HepG2 (cell line): ENCODE measurements at regions of chr7 and their contacts with region 1.

Region 1: GRCh38 chr7:113289140-113289740 is 170.9 kb upstream of the SMIM30 start:
- DNase-seq: peak; percentile 36
- ATAC-seq: peak; percentile 100
- H3K4me3 ChIP-seq: no peak overlapping the region
- H3K27ac ChIP-seq: no peak overlapping the region
- H3K4me1 ChIP-seq: no peaks in the 10 kb centered on the region
- H3K27me3 ChIP-seq: no peaks in the 10 kb centered on the region
- CTCF ChIP-seq: peak; percentile 68
- EP300 ChIP-seq: no peak
- POLR2A ChIP-seq: no peak
- RAD21 ChIP-seq: no peak

Region 2: GRCh38 chr7:113015032-113015645 is 274.1 kb before region 1 on chr7:
- CTCF ChIA-PET with region 1: no interaction called
- POLR2A ChIA-PET with region 1: no interaction called
- in situ Hi-C with region 1: loop called (anchors 25 kb)
- intact Hi-C with region 1: loop called (anchors 1 kb)
- DNase-seq: peak; percentile 11
- ATAC-seq: no peak
- H3K4me3 ChIP-seq: no peak overlapping the region
- H3K27ac ChIP-seq: no peak overlapping the region
- H3K4me1 ChIP-seq: no peaks in the 10 kb centered on the region
- H3K27me3 ChIP-seq: no peaks in the 10 kb centered on the region
- CTCF ChIP-seq: peak; percentile 19; the same call in 1 of the 2 replicates
- EP300 ChIP-seq: no peak
- POLR2A ChIP-seq: no peak
- RAD21 ChIP-seq: no peak

Region 3: GRCh38 chr7:113159746-113160339 is 129.4 kb before region 1 on chr7:
- CTCF ChIA-PET with region 1: no interaction called
- POLR2A ChIA-PET with region 1: no interaction called
- in situ Hi-C with region 1: no loop called
- intact Hi-C with region 1: loop called (anchors 1 kb)
- DNase-seq: peak; percentile 30
- ATAC-seq: peak; percentile 87
- H3K4me3 ChIP-seq: no peak overlapping the region
- H3K27ac ChIP-seq: no peak overlapping the region
- H3K4me1 ChIP-seq: no peaks in the 10 kb centered on the region
- H3K27me3 ChIP-seq: no peaks in the 10 kb centered on the region
- CTCF ChIP-seq: peak; percentile 57
- EP300 ChIP-seq: no peak
- POLR2A ChIP-seq: no peak
- RAD21 ChIP-seq: no peak

Region 4: GRCh38 chr7:113321201-113321600 is 32.0 kb after region 1 on chr7:
- CTCF ChIA-PET with region 1: no interaction called
- POLR2A ChIA-PET with region 1: no interaction called
- in situ Hi-C with region 1: no loop called
- intact Hi-C with region 1: no loop called
- DNase-seq: no peak
- ATAC-seq: no peak
- H3K4me3 ChIP-seq: no peak overlapping the region
- H3K27ac ChIP-seq: no peak overlapping the region
- H3K4me1 ChIP-seq: no peaks in the 10 kb centered on the region
- H3K27me3 ChIP-seq: no peaks in the 10 kb centered on the region
- CTCF ChIP-seq: no peak
- EP300 ChIP-seq: no peak
- POLR2A ChIP-seq: no peak
- RAD21 ChIP-seq: no peak

Region 5: DNA sequence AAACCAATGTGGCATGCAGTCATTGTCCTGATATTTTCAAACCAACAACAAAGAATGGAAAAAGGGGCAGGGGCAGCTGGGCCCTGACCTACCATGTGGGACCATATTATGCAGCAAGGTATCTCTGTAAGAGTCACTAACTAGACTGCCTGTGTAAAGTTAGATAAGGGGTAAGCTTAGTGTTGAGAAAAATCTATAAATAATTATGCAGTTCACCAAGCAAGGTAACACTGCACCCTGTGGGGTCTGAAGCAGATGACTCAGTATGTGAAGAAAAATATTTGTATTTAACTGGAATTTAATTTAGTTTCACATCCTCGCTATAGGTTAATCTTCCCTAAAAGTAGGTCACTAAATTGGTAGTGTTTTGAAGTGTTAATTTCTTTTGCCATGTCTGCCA is 530.2 kb after region 1 on chr7:
- CTCF ChIA-PET with region 1: no interaction called
- POLR2A ChIA-PET with region 1: no interaction called
- in situ Hi-C with region 1: no loop called
- intact Hi-C with region 1: loop called (anchors 5 kb)
- DNase-seq: no peak
- ATAC-seq: no peak
- H3K4me3 ChIP-seq: no peak overlapping the region
- H3K27ac ChIP-seq: no peak overlapping the region
- H3K4me1 ChIP-seq: no peaks in the 10 kb centered on the region
- H3K27me3 ChIP-seq: no peaks in the 10 kb centered on the region
- CTCF ChIP-seq: no peak
- EP300 ChIP-seq: no peak
- POLR2A ChIP-seq: no peak
- RAD21 ChIP-seq: no peak